ENCODE measurements at regions of chr20 and their contacts with region 1.

Region 1: DNA sequence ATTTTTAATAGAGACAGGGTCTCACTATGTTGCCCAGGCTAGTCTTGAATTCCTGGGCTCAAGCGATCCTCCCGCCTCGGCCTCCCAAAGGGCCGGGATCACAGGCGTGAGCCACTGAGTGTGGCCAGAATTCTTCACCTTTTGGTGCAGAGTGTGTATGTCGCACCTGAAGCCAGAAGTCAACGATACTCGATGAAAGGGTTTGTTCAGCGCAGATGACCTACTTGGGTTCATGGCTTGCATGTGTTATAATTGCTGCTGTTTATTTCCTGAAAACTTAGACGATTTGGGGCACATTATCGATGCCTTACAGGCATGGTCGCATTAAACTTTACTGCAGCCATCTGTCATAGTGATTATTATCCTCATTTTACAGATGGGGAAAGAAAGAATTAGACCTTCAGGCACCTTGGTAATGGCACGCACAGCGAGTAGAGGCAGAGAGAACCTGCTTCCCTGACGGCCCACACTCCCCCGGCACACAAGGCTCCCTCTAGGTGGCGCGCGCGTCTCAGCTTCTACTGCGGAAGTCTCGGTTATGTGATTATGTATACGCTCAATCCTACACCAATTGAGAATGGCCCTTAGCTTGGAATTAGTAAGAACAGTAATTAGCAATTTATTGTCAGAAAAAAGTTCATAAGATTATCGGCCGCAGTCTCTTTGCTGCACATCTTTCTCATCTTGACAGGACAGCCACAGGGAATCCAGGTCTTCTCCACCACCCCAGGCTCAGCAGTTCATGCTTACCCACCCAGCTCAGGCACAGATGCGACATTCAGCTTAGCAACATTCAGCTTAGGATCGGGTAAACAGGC is 212.8 kb upstream of the PROKR2 start:
- DNase-seq: peak; percentile 26
- ATAC-seq: peak; percentile 96
- H3K4me3 ChIP-seq: no peak overlapping the region
- H3K27ac ChIP-seq: no peak overlapping the region
- H3K4me1 ChIP-seq: peaks cover 3% of the 10 kb centered on the region; the same call in 1 of the 2 replicates
- H3K27me3 ChIP-seq: no peaks in the 10 kb centered on the region
- CTCF ChIP-seq: peak; percentile 93 to 97 (median 93)
- EP300 ChIP-seq: no peak
- POLR2A ChIP-seq: no peak
- RAD21 ChIP-seq: peak; percentile 92

Region 2: DNA sequence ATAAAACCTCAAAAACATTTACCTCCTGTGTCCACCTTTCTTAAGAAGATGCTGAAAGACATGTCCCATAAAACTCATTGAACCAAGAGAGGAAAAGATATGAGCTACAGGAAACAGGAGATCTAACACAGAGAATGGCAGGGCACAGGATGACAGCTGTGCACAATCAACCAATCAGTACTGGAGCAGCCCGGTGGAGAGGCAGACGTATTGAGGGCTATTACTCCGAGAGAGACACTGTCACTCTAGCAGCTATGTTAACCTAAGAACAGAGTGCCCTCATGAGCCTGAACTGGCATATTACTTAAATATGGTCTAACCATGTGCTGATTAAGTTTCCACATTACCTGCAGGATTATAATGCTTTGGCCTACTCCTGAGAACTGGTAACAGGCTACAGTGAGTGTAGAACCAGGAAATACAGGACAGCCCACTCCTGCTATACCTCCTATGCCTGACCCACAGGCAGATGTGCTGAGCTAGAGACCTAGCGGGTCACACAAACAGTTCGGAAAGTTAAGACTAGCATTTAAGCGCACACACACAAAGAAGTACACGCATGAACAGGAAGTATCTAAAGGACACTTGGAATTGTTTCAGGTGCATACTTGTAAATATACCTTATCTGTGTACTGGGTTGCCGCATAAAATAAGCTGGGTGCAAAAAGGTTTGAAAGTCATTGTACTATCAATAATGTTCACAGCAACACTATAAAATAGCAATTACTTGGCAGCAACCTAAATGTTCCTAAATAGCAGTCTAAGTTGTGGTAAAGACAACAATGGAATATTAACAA is 21.4 kb after region 1 on chr20:
- CTCF ChIA-PET with region 1: interaction called, 14 read pairs
- POLR2A ChIA-PET with region 1: interaction called, 5 read pairs
- RAD21 ChIA-PET with region 1: no interaction called
- SMC1A ChIA-PET with region 1: interaction called, 6 read pairs
- in situ Hi-C with region 1: no loop called
- intact Hi-C with region 1: no loop called
- DNase-seq: no peak
- ATAC-seq: peak; percentile 33
- H3K4me3 ChIP-seq: no peak overlapping the region
- H3K27ac ChIP-seq: no peak overlapping the region
- H3K4me1 ChIP-seq: no peaks in the 10 kb centered on the region
- H3K27me3 ChIP-seq: no peaks in the 10 kb centered on the region
- CTCF ChIP-seq: no peak
- EP300 ChIP-seq: no peak
- POLR2A ChIP-seq: peak; percentile 49; the same call in 1 of the 2 replicates
- RAD21 ChIP-seq: no peak

Region 3: DNA sequence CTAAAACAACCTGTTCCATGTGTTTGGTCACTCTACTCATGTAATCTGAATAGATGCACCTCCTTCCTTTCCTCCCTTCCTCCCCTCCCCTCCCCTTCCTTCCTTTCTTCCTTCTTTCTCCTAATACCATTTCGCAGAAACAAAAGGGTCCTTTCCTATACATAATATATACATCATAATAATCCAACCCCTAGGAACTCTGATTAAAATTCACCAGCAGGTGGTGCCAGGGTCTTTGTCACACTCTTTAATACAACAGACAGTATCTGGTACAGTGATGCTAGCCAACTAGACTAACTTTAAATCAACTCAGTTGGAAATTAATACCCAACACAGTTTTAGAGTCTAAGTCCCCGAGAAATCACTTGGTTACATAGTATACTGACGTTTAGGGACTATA is 39.5 kb after region 1 on chr20:
- CTCF ChIA-PET with region 1: interaction called, 12 read pairs
- POLR2A ChIA-PET with region 1: no interaction called
- RAD21 ChIA-PET with region 1: interaction called, 10 read pairs
- SMC1A ChIA-PET with region 1: interaction called, 8 read pairs
- in situ Hi-C with region 1: no loop called
- intact Hi-C with region 1: no loop called
- DNase-seq: no peak
- ATAC-seq: peak; percentile 85
- H3K4me3 ChIP-seq: no peak overlapping the region
- H3K27ac ChIP-seq: no peak overlapping the region
- H3K4me1 ChIP-seq: no peaks in the 10 kb centered on the region
- H3K27me3 ChIP-seq: no peaks in the 10 kb centered on the region
- CTCF ChIP-seq: peak; percentile 34 to 62 (median 38); a peak in 5 of 6 replicates
- EP300 ChIP-seq: no peak
- POLR2A ChIP-seq: no peak
- RAD21 ChIP-seq: peak; percentile 78

Region 4: DNA sequence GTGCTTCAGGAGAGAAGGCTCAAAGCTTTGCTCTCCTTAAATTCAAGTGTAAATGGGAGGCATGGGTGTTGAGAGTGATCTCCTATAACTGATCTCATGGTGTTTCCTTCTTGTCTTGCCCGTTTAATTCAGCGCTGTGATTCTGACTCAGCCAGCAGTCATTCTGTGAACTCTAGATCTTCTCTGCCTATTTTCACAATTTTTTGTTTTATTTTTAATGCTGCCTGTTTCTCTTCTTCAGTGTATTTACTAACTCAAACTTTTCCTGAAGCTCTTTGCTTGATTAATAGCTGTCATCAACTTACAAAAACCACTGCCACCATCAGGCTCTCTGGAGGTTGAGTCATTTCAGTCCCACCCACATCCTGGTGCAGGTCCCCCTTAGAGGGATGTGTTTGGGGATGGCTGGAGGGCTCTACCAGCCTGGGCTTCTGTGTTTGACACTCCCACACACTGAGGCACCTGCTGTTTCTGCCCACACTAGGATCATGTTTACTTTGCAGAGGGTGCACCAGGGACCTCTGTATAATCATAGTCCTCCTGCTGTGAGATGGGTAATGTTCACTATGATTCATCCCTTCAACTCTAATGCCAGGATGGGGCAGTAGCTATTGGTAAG is 314.6 kb after region 1 on chr20:
- CTCF ChIA-PET with region 1: interaction called, 4 read pairs
- POLR2A ChIA-PET with region 1: no interaction called
- RAD21 ChIA-PET with region 1: interaction called, 17 read pairs
- SMC1A ChIA-PET with region 1: interaction called, 4 read pairs
- in situ Hi-C with region 1: no loop called
- intact Hi-C with region 1: no loop called
- DNase-seq: peak; percentile 78
- ATAC-seq: peak; percentile 87
- H3K4me3 ChIP-seq: peak overlapping the region; percentile 24; the same call in 1 of the 2 replicates
- H3K27ac ChIP-seq: no peak overlapping the region
- H3K4me1 ChIP-seq: peaks cover 31% of the 10 kb centered on the region
- H3K27me3 ChIP-seq: no peaks in the 10 kb centered on the region
- CTCF ChIP-seq: no peak
- EP300 ChIP-seq: peak; percentile 56 to 62; a peak in 2 of 4 replicates
- POLR2A ChIP-seq: no peak
- RAD21 ChIP-seq: no peak

Region 5: GRCh38 chr20:5933802-5934436 is 404.4 kb after region 1 on chr20:
- CTCF ChIA-PET with region 1: interaction called, 77 read pairs
- POLR2A ChIA-PET with region 1: no interaction called
- RAD21 ChIA-PET with region 1: interaction called, 30 read pairs
- SMC1A ChIA-PET with region 1: interaction called, 70 read pairs
- in situ Hi-C with region 1: loop called (anchors 5 kb)
- intact Hi-C with region 1: loop called (anchors 1 kb)
- DNase-seq: peak; percentile 26
- ATAC-seq: peak; percentile 94
- H3K4me3 ChIP-seq: no peak overlapping the region
- H3K27ac ChIP-seq: no peak overlapping the region
- H3K4me1 ChIP-seq: no peaks in the 10 kb centered on the region
- H3K27me3 ChIP-seq: 0 out of 4 replicates have a peak, but pooled peaks cover 0 to 1% of the 10 kb centered on the region in 2 experiments
- CTCF ChIP-seq: peak; percentile 35 to 61 (median 43); a peak in 4 of 6 replicates
- EP300 ChIP-seq: no peak
- POLR2A ChIP-seq: no peak
- RAD21 ChIP-seq: peak; percentile 67

Region 6: GRCh38 chr20:5996765-5997164 is 467.2 kb after region 1 on chr20:
- CTCF ChIA-PET with region 1: interaction called, 18 read pairs
- POLR2A ChIA-PET with region 1: no interaction called
- RAD21 ChIA-PET with region 1: interaction called, 3 read pairs
- SMC1A ChIA-PET with region 1: interaction called, 12 read pairs
- in situ Hi-C with region 1: loop called (anchors 5 kb)
- intact Hi-C with region 1: no loop called
- DNase-seq: peak; percentile 40
- ATAC-seq: peak; percentile 99
- H3K4me3 ChIP-seq: no peak overlapping the region
- H3K27ac ChIP-seq: no peak overlapping the region
- H3K4me1 ChIP-seq: peaks cover 7% of the 10 kb centered on the region; the same call in 1 of the 2 replicates
- H3K27me3 ChIP-seq: no peaks in the 10 kb centered on the region
- CTCF ChIP-seq: peak in 1 of 3 experiments; percentile 9; a peak in 1 of 6 replicates
- EP300 ChIP-seq: peak in 1 of 2 experiments; percentile 27; a peak in 1 of 4 replicates
- POLR2A ChIP-seq: no peak
- RAD21 ChIP-seq: no peak

Region 7: DNA sequence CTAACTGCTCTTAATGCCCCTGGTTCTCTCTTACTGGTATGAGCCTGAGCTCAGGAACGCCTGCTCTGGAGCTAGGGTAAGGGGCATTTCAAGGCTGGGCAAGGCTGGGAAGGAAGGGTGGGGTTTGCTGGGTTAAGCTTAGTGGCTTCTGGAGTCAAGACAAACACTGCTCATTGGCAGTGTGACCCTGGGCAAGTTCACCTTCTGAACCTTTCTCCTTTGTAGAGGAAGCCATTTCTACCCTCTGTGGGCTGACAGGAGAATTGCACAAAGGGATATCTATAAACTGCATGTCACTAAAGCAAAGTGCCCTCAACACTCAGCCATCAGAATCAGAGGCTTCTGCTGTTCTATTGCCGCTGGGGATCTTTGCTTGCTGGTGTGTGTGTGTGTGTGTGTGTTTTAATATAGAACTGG is 544.6 kb after region 1 on chr20:
- CTCF ChIA-PET with region 1: interaction called, 44 read pairs
- POLR2A ChIA-PET with region 1: no interaction called
- RAD21 ChIA-PET with region 1: interaction called, 8 read pairs
- SMC1A ChIA-PET with region 1: interaction called, 19 read pairs
- in situ Hi-C with region 1: loop called (anchors 5 kb)
- intact Hi-C with region 1: loop called (anchors 1 kb)
- DNase-seq: no peak
- ATAC-seq: peak; percentile 88
- H3K4me3 ChIP-seq: no peak overlapping the region
- H3K27ac ChIP-seq: no peak overlapping the region
- H3K4me1 ChIP-seq: no peaks in the 10 kb centered on the region
- H3K27me3 ChIP-seq: no peaks in the 10 kb centered on the region
- CTCF ChIP-seq: peak; percentile 23 to 50 (median 28); a peak in 4 of 6 replicates
- EP300 ChIP-seq: no peak
- POLR2A ChIP-seq: no peak
- RAD21 ChIP-seq: no peak